ENCODE measurements at regions of chr18 and their contacts with region 1.

Region 1: DNA sequence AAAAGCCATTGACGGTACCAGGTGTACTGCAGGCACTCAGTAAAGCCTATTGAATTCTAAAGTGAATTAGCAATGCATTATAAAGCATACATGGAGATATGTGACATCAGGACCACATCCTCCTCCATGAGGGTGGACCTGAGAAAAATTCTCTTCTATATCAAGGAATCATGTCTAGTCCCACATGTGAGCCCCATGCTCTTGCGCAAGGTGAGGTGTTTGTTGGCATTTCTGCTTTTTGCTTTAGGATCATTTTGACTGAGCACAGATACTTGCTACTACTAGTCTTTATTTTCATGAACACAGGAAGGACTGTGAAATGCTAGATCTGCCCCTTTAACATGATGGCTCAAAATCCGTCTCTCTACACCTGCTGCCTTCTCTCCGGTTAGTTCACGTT is 183.9 kb downstream of the CD226 start:
- DNase-seq: no peak
- H3K4me3 ChIP-seq: no peak overlapping the region
- H3K27ac ChIP-seq: no peak overlapping the region
- H3K4me1 ChIP-seq: no peaks in the 10 kb centered on the region
- H3K27me3 ChIP-seq: no peaks in the 10 kb centered on the region
- CTCF ChIP-seq: no peak
- POLR2A ChIP-seq: no peak

Region 2: GRCh38 chr18:68177807-68178702 is 1585.8 kb before region 1 on chr18:
- intact Hi-C with region 1: no loop called
- DNase-seq: no peak
- H3K4me3 ChIP-seq: no peak overlapping the region
- H3K27ac ChIP-seq: no peak overlapping the region
- H3K4me1 ChIP-seq: no peaks in the 10 kb centered on the region
- H3K27me3 ChIP-seq: peaks cover 0 to 2% of the 10 kb centered on the region in 2 donors
- CTCF ChIP-seq: no peak
- POLR2A ChIP-seq: no peak

Region 3: DNA sequence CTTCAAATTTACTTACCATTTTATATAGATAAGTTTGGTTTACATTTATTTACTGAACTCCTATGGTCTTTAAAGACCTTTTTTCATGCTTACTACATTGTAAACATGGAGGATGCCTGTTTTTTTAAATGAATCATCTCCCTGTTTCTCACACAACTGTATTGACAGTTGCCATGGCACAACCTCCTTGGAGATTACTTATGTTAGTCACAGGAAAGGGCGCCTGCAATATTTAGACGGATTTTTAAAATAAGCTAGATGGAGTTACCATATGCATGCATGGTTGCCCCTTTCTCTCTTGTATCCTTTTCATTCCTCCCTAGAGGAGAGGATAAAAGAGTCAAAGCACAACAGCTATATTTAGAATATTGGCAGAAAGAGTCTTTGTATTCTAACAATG is 1000.7 kb before region 1 on chr18:
- intact Hi-C with region 1: no loop called
- DNase-seq: no peak
- H3K4me3 ChIP-seq: no peak overlapping the region
- H3K27ac ChIP-seq: no peak overlapping the region
- H3K4me1 ChIP-seq: no peaks in the 10 kb centered on the region
- H3K27me3 ChIP-seq: no peaks in the 10 kb centered on the region
- CTCF ChIP-seq: no peak
- POLR2A ChIP-seq: no peak

Region 4: GRCh38 chr18:69102959-69103358 is 660.9 kb before region 1 on chr18:
- intact Hi-C with region 1: no loop called
- DNase-seq: no peak
- H3K4me3 ChIP-seq: no peak overlapping the region
- H3K27ac ChIP-seq: no peak overlapping the region
- H3K4me1 ChIP-seq: no peaks in the 10 kb centered on the region
- H3K27me3 ChIP-seq: no peaks in the 10 kb centered on the region
- CTCF ChIP-seq: no peak
- POLR2A ChIP-seq: no peak

Region 5: DNA sequence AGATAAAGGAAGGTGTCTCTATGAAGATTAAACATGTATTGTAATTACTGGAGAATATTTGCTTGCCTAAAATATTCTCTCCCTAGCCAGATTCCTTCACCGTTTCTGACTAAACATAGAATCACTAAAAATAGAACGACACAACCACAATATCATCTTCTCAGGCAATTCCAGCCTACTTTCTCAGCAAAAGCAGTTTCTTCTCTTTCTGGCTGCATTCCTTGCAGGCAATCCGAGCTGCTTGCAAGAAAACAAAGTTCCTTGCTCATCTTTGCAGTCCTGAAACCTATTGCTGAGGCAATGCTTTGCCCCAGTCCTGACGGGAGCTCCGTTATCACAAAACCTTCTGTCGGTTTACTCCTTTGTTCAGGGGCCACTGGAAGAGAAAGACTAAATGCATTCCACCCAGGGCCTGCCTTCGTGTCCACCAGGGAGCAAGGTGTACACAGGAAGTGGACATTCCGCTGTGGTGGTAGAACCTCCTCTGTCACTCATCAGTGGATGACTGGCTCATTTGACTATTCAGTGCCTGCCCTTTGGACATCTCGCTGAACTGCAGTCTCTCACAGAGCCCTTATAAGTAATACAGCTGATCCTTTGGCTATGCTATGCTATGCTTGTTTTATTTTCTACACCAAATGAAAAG is 602.3 kb before region 1 on chr18:
- intact Hi-C with region 1: no loop called
- DNase-seq: no peak
- H3K4me3 ChIP-seq: no peak overlapping the region
- H3K27ac ChIP-seq: no peak overlapping the region
- H3K4me1 ChIP-seq: no peaks in the 10 kb centered on the region
- H3K27me3 ChIP-seq: no peaks in the 10 kb centered on the region
- CTCF ChIP-seq: no peak
- POLR2A ChIP-seq: no peak

Region 6: DNA sequence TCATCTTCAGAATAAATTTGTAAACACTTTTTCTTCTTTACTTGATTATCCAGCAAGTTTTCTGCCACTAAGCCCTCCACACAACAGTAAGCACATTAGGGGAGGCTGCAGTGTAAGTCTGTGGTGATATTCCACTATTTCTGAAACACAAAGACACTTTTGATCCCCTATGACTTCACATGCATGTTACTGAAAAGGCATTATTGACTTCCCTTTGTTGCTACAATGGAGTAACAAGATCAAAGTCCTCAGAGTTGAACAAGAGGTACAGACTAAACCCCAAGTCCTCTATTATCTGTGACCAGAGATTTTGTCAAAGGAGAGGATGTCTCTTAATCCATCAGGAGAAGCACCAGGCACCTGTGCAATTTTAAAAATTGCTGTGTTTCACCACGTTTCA is 26.0 kb after region 1 on chr18:
- intact Hi-C with region 1: loop called (anchors 2 kb)
- DNase-seq: no peak
- H3K4me3 ChIP-seq: no peak overlapping the region
- H3K27ac ChIP-seq: no peak overlapping the region
- H3K4me1 ChIP-seq: no peaks in the 10 kb centered on the region
- H3K27me3 ChIP-seq: no peaks in the 10 kb centered on the region
- CTCF ChIP-seq: no peak
- POLR2A ChIP-seq: no peak

Measured in breast epithelium (tissue), 4 donors.